ENCODE measurements at regions of chr11 and their contacts with region 1.

Region 1: GRCh38 chr11:77547863-77548551 is 41.7 kb upstream of the AQP11 start:
- DNase-seq: peak in 1 of 3 donors; percentile 58
- ATAC-seq: peak; percentile 93
- H3K4me3 ChIP-seq: no peak overlapping the region
- H3K4me1 ChIP-seq: peaks cover 11% of the 10 kb centered on the region
- CTCF ChIP-seq: no peak

Region 2: GRCh38 chr11:77205467-77206263 is 342.3 kb before region 1 on chr11:
- intact Hi-C with region 1: no loop called
- DNase-seq: no peak
- ATAC-seq: no peak
- H3K4me3 ChIP-seq: no peak overlapping the region
- H3K4me1 ChIP-seq: no peaks in the 10 kb centered on the region
- CTCF ChIP-seq: no peak

Region 3: DNA sequence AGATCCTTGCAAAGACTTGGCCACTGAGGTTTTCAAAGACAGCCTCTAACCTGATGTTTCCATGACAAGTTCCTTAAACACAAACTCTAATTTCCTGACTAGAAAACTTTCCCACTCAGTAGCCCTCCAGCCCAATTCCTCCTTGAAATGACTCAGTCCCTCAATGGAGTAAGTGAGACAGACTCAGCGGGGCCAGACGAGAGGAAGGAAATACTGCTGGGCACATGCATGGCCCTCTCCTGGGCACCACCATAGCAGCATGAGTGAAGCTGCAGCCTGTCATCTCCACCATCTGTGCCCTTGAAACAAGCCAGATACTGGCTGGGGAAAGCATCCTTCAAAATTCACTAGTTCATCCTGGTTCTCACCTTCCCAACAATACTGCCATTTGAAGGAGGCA is 170.3 kb before region 1 on chr11:
- intact Hi-C with region 1: no loop called
- DNase-seq: no peak
- ATAC-seq: no peak
- H3K4me3 ChIP-seq: no peak overlapping the region
- H3K4me1 ChIP-seq: peaks cover 25% of the 10 kb centered on the region
- CTCF ChIP-seq: no peak

Region 4: GRCh38 chr11:77473801-77474683 is 74.0 kb before region 1 on chr11 and contains the start of gene PAK1:
- intact Hi-C with region 1: loop called in 1 of 2 experiments (anchors 10 kb)
- DNase-seq: peak; percentile 92 to 95 (median 95)
- ATAC-seq: peak; percentile 81
- H3K4me3 ChIP-seq: peak within 1 kb of the TSS; percentile 51
- H3K4me1 ChIP-seq: peaks cover 26% of the 10 kb centered on the region
- CTCF ChIP-seq: no peak
- total RNA-seq, gene PAK1: 73.5 to 125 (median 116) TPM